Activated naive CD4-positive, alpha-beta T cell treated with anti-CD3 and anti-CD28 coated beads for 36 hours (primary cell): ENCODE measurements at regions of chr2 and their contacts with region 1.

Region 1: GRCh38 chr2:237072067-237072931 is 13.4 kb upstream of the COPS8 start:
- DNase-seq: peak; percentile 82
- H3K4me3 Mint-ChIP-seq: no peak overlapping the region
- H3K27ac Mint-ChIP-seq: no peak overlapping the region
- H3K4me1 Mint-ChIP-seq: no peaks in the 10 kb centered on the region
- H3K27me3 Mint-ChIP-seq: no peaks in the 10 kb centered on the region

Region 2: GRCh38 chr2:236343400-236344161 is 728.7 kb before region 1 on chr2:
- CTCF ChIA-PET with region 1: no interaction called
- intact Hi-C with region 1: loop called (anchors 1 kb)
- DNase-seq: peak; percentile 70
- H3K4me3 Mint-ChIP-seq: no peak overlapping the region
- H3K27ac Mint-ChIP-seq: no peak overlapping the region
- H3K4me1 Mint-ChIP-seq: no peaks in the 10 kb centered on the region
- H3K27me3 Mint-ChIP-seq: no peaks in the 10 kb centered on the region

Region 3: GRCh38 chr2:236352761-236353593 is 719.3 kb before region 1 on chr2:
- CTCF ChIA-PET with region 1: interaction called, 6 read pairs
- intact Hi-C with region 1: loop called (anchors 2 kb)
- DNase-seq: peak; percentile 45
- H3K4me3 Mint-ChIP-seq: no peak overlapping the region
- H3K27ac Mint-ChIP-seq: no peak overlapping the region
- H3K4me1 Mint-ChIP-seq: no peaks in the 10 kb centered on the region
- H3K27me3 Mint-ChIP-seq: no peaks in the 10 kb centered on the region

Region 4: DNA sequence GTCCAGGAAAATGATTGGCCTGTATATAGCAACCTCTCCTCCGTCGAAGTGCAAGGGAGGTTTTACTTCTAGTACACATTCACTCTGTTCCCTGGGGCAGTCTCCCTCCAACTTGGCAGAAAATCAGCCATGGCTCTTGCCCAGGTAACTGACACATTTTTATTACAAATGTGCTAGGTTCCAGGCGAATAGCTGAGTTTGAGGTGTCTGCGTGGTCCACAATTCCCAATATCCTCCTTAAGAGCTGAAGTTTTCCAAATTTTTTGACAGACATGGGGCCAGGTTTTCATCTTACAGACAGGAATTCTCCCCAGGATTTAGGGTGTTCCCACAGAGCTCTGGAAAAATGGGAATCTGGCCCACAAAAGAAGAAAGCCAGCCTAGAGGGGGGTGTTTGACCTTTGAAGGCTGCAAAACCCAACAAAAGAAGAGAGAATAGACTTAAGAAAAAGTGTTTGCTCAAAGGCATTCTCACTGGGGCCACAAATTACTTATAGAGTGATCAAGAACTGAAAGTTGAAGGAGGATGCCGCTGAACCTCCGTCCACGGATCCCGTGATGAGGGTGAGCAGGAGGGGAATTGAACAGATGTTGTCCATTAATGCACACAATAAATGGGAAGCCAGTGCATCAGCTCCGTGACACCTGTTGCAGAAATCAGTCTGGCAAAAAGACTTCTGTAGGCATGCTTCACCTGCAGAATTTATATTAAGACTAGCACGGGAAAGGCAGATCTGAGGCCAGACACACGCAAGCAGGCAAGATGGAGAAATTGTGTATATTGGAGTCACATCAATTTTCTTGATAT is 228.9 kb before region 1 on chr2:
- CTCF ChIA-PET with region 1: no interaction called
- intact Hi-C with region 1: no loop called
- DNase-seq: no peak
- H3K4me3 Mint-ChIP-seq: no peak overlapping the region
- H3K27ac Mint-ChIP-seq: no peak overlapping the region
- H3K4me1 Mint-ChIP-seq: peaks cover 1% of the 10 kb centered on the region
- H3K27me3 Mint-ChIP-seq: no peaks in the 10 kb centered on the region

Region 5: GRCh38 chr2:237085248-237086221 is 13.2 kb after region 1 on chr2 and contains the start of gene COPS8:
- CTCF ChIA-PET with region 1: interaction called, 12 read pairs
- intact Hi-C with region 1: no loop called
- DNase-seq: peak; percentile 93
- H3K4me3 Mint-ChIP-seq: peak within 1 kb of the TSS; percentile 97
- H3K27ac Mint-ChIP-seq: peak within 1 kb of the TSS; percentile 89
- H3K4me1 Mint-ChIP-seq: peaks cover 24% of the 10 kb centered on the region
- H3K27me3 Mint-ChIP-seq: no peaks in the 10 kb centered on the region
- total RNA-seq, gene COPS8: 67.8 to 69.2 TPM

Region 6: GRCh38 chr2:237403024-237403882 is 331.0 kb after region 1 on chr2:
- CTCF ChIA-PET with region 1: no interaction called
- intact Hi-C with region 1: no loop called
- DNase-seq: no peak
- H3K4me3 Mint-ChIP-seq: no peak overlapping the region
- H3K27ac Mint-ChIP-seq: no peak overlapping the region
- H3K4me1 Mint-ChIP-seq: no peaks in the 10 kb centered on the region
- H3K27me3 Mint-ChIP-seq: no peaks in the 10 kb centered on the region